Activated naive CD4-positive, alpha-beta T cell treated with anti-CD3 and anti-CD28 coated beads for 36 hours (primary cell): ENCODE measurements at regions of chr5 and their contacts with region 1.

Region 1: DNA sequence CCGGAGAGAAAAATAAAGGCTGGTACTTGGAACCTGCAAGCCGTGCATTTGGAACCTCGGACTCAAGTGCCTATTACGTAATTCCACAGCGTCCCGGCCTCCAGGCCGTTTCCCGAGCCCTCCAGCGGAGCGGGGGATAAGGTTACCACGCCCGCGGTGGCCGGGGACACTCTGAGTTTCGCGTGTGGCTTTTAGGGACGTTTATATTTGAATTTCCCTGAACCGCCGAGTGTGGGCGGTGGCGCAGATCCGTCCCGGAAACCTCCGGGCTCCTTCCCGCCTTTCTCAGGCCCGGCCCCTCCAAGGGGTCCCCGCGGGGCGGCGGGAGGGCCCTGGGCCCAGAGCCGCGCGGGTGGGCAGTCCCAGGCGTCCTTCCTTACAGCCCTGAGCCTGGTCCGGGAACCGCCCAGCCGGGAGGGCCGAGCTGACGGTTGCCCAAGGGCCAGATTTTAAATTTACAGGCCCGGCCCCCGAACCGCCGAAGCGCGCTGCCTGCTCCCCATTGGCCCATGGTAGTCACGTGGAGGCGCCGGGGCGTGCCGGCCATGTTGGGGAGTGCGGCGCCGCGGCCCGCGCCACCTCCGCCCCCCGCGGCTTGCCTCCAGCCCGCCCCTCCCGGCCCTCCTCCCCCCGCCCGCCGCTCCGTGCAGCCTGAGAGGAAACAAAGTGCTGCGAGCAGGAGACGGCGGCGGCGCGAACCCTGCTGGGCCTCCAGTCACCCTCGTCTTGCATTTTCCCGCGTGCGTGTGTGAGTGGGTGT is at the start of gene LMNB1:
- DNase-seq: peak; percentile 97
- H3K4me3 Mint-ChIP-seq: peak within 1 kb of the TSS; percentile 96
- H3K27ac Mint-ChIP-seq: peak within 1 kb of the TSS; percentile 97
- H3K4me1 Mint-ChIP-seq: peaks cover 26% of the 10 kb centered on the region
- H3K27me3 Mint-ChIP-seq: no peaks in the 10 kb centered on the region
- total RNA-seq, gene LMNB1: 274 to 289 TPM

Region 2: GRCh38 chr5:125940694-125941093 is 836.0 kb before region 1 on chr5:
- CTCF ChIA-PET with region 1: no interaction called
- intact Hi-C with region 1: no loop called
- DNase-seq: no peak
- H3K4me3 Mint-ChIP-seq: no peak overlapping the region
- H3K27ac Mint-ChIP-seq: no peak overlapping the region
- H3K4me1 Mint-ChIP-seq: no peaks in the 10 kb centered on the region
- H3K27me3 Mint-ChIP-seq: no peaks in the 10 kb centered on the region

Region 3: GRCh38 chr5:126499853-126500342 is 276.8 kb before region 1 on chr5:
- CTCF ChIA-PET with region 1: no interaction called
- intact Hi-C with region 1: loop called (anchors 10 kb)
- DNase-seq: peak; percentile 43
- H3K4me3 Mint-ChIP-seq: no peak overlapping the region
- H3K27ac Mint-ChIP-seq: no peak overlapping the region
- H3K4me1 Mint-ChIP-seq: peaks cover 18% of the 10 kb centered on the region
- H3K27me3 Mint-ChIP-seq: no peaks in the 10 kb centered on the region

Region 4: GRCh38 chr5:126686451-126687126 is 90.1 kb before region 1 on chr5:
- CTCF ChIA-PET with region 1: interaction called, 154 read pairs
- intact Hi-C with region 1: loop called (anchors 1 kb)
- DNase-seq: no peak
- H3K4me3 Mint-ChIP-seq: no peak overlapping the region
- H3K27ac Mint-ChIP-seq: no peak overlapping the region
- H3K4me1 Mint-ChIP-seq: peaks cover 37% of the 10 kb centered on the region
- H3K27me3 Mint-ChIP-seq: no peaks in the 10 kb centered on the region

Region 5: GRCh38 chr5:126801992-126802294 is 25.3 kb after region 1 on chr5:
- CTCF ChIA-PET with region 1: interaction called, 13 read pairs
- intact Hi-C with region 1: no loop called
- DNase-seq: peak; percentile 19
- H3K4me3 Mint-ChIP-seq: no peak overlapping the region
- H3K27ac Mint-ChIP-seq: no peak overlapping the region
- H3K4me1 Mint-ChIP-seq: peaks cover 51% of the 10 kb centered on the region
- H3K27me3 Mint-ChIP-seq: no peaks in the 10 kb centered on the region

Region 6: DNA sequence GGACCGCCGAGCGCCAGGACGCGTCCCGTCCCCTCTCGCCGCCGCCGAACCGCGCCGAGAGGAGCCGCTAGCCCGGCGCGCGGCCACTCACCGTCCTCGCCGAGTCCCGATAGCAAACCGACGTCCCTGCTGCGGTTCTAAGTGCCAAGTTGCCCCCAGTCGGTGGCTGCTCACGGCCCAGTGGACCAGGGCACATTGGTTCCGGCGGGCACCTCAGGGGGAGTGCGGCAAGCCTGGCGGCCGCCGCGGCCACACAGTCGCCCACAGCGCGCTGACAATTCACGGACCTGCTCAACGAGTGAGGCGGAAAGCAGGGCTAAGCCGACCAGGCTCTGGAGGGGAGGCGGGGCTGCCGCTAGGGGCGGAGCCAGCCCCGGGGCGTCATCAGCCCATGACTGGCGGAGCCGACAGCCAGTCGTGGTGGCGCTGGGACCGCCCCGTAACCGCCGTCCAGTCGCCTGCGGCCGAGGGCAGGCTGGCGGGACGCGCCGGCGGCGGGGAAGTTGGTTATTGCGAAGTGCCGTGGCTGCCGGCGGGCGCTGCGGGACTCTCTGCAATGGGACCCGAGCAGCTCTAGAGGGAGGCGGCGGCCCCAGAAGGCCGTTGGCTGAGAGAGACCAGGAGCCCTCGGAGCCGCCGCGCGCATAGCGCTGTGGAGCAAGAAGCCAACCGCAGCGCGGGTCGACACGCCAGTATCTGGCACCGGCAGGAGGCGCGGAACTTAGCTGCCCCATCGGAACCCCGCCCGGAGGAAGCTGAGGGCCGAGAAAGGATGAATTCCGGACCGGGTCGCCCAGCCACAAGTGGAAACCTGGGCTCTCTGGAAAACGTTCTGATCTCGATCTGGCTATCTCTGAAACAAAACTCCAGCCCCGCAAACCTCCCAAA is 253.8 kb after region 1 on chr5 and contains the start of gene MARCHF3:
- CTCF ChIA-PET with region 1: interaction called, 5 read pairs
- intact Hi-C with region 1: loop called (anchors 1 kb)
- DNase-seq: peak; percentile 94
- H3K4me3 Mint-ChIP-seq: peak within 1 kb of the TSS; percentile 93
- H3K27ac Mint-ChIP-seq: peak within 1 kb of the TSS; percentile 75
- H3K4me1 Mint-ChIP-seq: peaks cover 31% of the 10 kb centered on the region
- H3K27me3 Mint-ChIP-seq: no peaks in the 10 kb centered on the region
- total RNA-seq, gene MARCHF3: 11.8 TPM

Region 7: DNA sequence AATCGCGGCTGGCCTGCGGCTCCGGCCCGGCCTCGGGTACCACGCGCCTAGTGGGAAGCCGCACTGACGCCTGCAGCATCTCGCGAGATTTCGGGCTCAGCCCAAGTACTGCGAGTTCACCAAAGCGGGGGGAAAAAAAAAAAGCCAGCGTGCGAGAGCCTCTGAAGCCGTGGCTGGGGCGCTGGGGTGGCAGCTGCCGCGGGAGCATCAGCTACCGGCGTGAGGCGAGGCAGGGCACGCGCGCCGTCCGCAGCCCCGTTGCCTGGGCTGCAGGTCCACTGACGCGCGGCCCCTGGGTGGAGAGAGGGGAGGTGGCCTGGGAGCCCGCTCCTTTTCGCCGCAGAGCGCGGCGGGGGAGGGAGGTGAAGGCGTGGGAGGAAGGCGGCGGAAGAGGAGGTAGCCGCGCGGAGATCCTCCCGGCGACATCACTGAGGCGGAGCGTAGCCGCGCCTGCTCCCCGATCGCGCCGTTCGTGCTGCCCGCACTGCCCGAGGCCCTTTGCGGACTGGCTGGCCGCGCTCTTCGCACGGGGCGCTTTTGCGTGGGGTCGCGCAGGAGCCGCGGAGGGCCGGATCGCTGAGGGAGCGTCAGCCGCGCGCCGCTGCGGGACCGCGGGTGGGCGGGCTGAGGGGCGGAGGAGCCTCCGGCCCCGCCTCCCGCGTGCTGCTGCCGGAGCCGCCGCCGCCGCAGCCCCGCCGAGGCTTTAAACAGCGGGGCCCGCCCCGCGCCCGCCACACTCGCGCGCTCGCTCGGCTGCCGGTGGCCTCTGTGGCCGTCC is 1306.5 kb after region 1 on chr5 and contains the start of gene SLC12A2:
- CTCF ChIA-PET with region 1: no interaction called
- intact Hi-C with region 1: loop called (anchors 1 kb)
- DNase-seq: peak; percentile 90
- H3K4me3 Mint-ChIP-seq: peak within 1 kb of the TSS; percentile 93
- H3K27ac Mint-ChIP-seq: peak within 1 kb of the TSS; percentile 96
- H3K4me1 Mint-ChIP-seq: peaks cover 47% of the 10 kb centered on the region
- H3K27me3 Mint-ChIP-seq: no peaks in the 10 kb centered on the region
- total RNA-seq, gene SLC12A2: 5.3 to 6.8 TPM